Head of caudate nucleus (tissue), 42 donors: ENCODE measurements at regions of chr1 and their contacts with region 1.

Region 1: GRCh38 chr1:223845810-223846682 is at the start of gene TP53BP2:
- DNase-seq: peak; percentile 67 to 95 (median 89)

Region 2: DNA sequence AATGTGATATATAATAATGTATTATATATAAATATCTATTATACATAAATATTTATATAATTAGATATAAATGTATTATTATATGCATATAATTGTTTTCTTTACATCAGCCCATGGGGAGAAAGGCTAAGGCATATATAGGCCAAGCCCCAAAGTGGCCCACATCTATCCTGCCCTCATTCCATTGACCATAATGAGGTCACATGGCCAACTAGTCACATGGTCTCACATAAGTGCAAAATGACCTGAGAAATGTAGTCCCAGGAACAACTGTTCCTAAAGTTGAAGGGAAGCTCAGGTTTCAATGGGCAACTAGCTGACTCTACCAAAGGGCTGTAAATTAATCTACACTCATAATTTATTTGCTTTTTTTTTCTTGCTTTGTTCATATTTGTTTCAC is 467.3 kb before region 1 on chr1:
- intact Hi-C with region 1: no loop called
- DNase-seq: no peak

Region 3: GRCh38 chr1:223712194-223712849 is 133.7 kb before region 1 on chr1 and contains the start of gene CAPN2:
- intact Hi-C with region 1: loop called (anchors 5 kb)
- DNase-seq: peak in 40 of 42 donors; percentile 66 to 92 (median 80)

Region 4: GRCh38 chr1:223755992-223756775 is 89.9 kb before region 1 on chr1:
- intact Hi-C with region 1: loop called (anchors 10 kb)
- DNase-seq: peak; percentile 49 to 91 (median 82)

Region 5: GRCh38 chr1:223811634-223812415 is 34.2 kb before region 1 on chr1:
- intact Hi-C with region 1: loop called (anchors 5 kb)
- DNase-seq: peak in 1 of 42 donors; percentile 54